KBM-7 (cell line): ENCODE measurements at regions of chr2 and their contacts with region 1.

Region 1: GRCh38 chr2:227406177-227407031 is 18.7 kb upstream of the SCYGR1 start:
- DNase-seq: peak; percentile 44

Region 2: GRCh38 chr2:227125506-227125905 is 280.9 kb before region 1 on chr2:
- in situ Hi-C with region 1: loop called (anchors 25 kb)
- DNase-seq: peak; percentile 12

Region 3: DNA sequence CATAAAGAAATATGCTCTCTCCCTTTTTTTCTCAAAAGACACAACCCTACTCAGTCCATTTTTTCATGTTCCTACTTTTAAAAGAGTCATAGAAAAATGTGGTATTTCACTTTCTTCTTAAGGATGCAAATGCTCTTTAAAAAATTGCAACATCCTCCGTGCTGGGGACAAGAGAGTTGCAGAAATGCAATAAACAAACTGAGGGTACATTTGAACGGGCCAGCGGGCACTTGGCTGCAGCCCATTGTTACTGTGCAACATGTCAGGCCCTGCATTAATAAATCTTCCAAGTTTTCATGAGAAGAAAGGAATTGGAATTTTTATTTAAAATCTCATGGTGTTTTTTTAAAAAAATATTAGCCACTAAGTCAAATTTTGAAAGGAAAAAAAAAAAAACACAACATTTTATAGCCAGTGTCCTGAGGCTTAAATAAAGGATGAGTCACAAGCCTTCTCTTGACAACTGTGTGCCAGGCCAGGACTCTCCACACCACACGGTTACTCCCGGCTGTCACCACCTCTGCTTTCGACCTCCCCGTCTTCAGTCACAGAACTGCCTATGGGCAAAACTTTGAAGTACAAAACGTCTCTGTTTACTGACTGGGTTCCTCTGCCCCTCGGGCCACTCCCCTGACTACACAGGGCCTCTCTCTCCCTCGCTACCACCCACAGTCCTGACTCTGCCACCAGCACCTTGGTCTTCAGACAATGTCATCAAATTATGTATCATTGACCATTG is 138.8 kb before region 1 on chr2:
- in situ Hi-C with region 1: no loop called
- DNase-seq: no peak